ENCODE measurements at regions of chr5 and their contacts with region 1.

Region 1: GRCh38 chr5:13566871-13567339 is 377.6 kb downstream of the DNAH5 start:
- DNase-seq: peak; percentile 71
- H3K4me3 ChIP-seq: no peak overlapping the region
- H3K4me3 Mint-ChIP-seq: no peak overlapping the region
- H3K27ac Mint-ChIP-seq: peak overlapping the region; percentile 77
- H3K4me1 ChIP-seq: peaks cover 27% of the 10 kb centered on the region
- H3K4me1 Mint-ChIP-seq: peaks cover 16% of the 10 kb centered on the region
- H3K27me3 ChIP-seq: no peaks in the 10 kb centered on the region
- H3K27me3 Mint-ChIP-seq: no peaks in the 10 kb centered on the region
- CTCF ChIP-seq: no peak

Region 2: DNA sequence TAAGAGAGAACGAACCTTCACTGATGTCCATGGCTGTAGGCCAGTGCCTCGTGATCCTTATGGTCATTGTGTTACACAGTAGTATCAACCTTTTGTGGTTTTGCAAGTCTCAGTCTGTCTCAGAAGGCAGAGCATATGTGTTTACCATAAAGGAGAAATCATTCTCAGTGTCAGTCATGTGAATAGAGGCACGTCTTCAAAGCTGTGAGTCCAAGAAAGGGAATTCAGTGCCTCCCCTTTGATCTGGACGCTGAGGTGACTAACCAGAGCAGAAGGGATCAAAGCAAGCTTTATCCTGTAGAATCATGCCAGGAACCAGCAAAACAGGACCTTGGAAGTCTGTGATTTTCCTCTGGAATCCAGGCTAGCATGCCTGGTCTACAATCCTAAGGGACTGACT is 56.3 kb before region 1 on chr5:
- CTCF ChIA-PET with region 1: no interaction called
- POLR2A ChIA-PET with region 1: no interaction called
- intact Hi-C with region 1: loop called (anchors 1 kb)
- DNase-seq: peak; percentile 76 to 82
- H3K4me3 ChIP-seq: no peak overlapping the region
- H3K4me3 Mint-ChIP-seq: no peak overlapping the region
- H3K27ac Mint-ChIP-seq: peak overlapping the region; percentile 72
- H3K4me1 ChIP-seq: peaks cover 26% of the 10 kb centered on the region
- H3K4me1 Mint-ChIP-seq: peaks cover 26% of the 10 kb centered on the region
- H3K27me3 ChIP-seq: no peaks in the 10 kb centered on the region
- H3K27me3 Mint-ChIP-seq: no peaks in the 10 kb centered on the region
- CTCF ChIP-seq: no peak

Region 3: DNA sequence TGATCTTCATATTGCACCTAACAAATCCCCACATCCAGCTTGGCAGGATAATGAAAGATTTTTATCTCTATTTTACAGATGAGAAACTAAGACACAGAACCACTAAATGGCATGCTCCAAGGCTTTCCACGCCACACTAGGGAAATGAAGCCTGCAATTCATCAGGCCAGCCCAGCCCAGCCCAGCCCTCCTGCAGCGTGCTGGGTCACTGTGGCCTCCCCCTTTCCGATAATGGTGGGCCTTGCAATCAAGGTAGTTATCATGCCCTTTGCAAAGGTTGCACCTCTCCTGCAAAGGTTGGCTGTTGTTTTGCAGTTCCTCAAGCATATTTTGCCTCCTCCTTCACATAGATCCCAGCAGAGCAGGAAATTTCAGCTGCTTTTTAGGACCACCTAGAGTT is 45.0 kb before region 1 on chr5:
- CTCF ChIA-PET with region 1: no interaction called
- POLR2A ChIA-PET with region 1: no interaction called
- intact Hi-C with region 1: loop called (anchors 2 kb)
- DNase-seq: no peak
- H3K4me3 ChIP-seq: no peak overlapping the region
- H3K4me3 Mint-ChIP-seq: no peak overlapping the region
- H3K27ac Mint-ChIP-seq: no peak overlapping the region
- H3K4me1 ChIP-seq: peaks cover 15% of the 10 kb centered on the region
- H3K4me1 Mint-ChIP-seq: peaks cover 8% of the 10 kb centered on the region
- H3K27me3 ChIP-seq: no peaks in the 10 kb centered on the region
- H3K27me3 Mint-ChIP-seq: no peaks in the 10 kb centered on the region
- CTCF ChIP-seq: no peak

Region 4: GRCh38 chr5:13553896-13554295 is 13.0 kb before region 1 on chr5:
- CTCF ChIA-PET with region 1: no interaction called
- POLR2A ChIA-PET with region 1: no interaction called
- intact Hi-C with region 1: no loop called
- DNase-seq: peak; percentile 40 to 64
- H3K4me3 ChIP-seq: no peak overlapping the region
- H3K4me3 Mint-ChIP-seq: no peak overlapping the region
- H3K27ac Mint-ChIP-seq: no peak overlapping the region
- H3K4me1 ChIP-seq: no peaks in the 10 kb centered on the region
- H3K4me1 Mint-ChIP-seq: no peaks in the 10 kb centered on the region
- H3K27me3 ChIP-seq: no peaks in the 10 kb centered on the region
- H3K27me3 Mint-ChIP-seq: peaks cover 4% of the 10 kb centered on the region
- CTCF ChIP-seq: no peak

Region 5: DNA sequence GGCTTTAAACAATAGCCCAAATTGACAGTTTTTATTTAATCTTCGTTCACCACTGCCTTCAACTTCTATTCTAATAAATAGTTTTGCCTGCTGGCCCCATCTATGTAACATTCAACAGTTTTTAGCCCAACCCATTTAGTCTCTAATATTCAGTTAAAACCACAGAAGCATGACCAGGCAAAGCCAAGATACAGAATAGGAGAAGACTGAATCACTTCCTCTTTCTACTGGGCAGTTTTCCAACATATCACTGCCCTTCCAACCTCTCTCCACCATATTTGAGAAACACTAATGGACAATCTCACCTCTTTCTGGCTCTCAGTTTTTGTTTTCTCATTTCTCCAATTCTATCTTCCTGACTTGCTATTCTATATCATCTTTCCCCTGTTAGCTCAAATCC is 24.7 kb after region 1 on chr5:
- CTCF ChIA-PET with region 1: no interaction called
- POLR2A ChIA-PET with region 1: no interaction called
- intact Hi-C with region 1: loop called (anchors 2 kb)
- DNase-seq: no peak
- H3K4me3 ChIP-seq: no peak overlapping the region
- H3K4me3 Mint-ChIP-seq: no peak overlapping the region
- H3K27ac Mint-ChIP-seq: no peak overlapping the region
- H3K4me1 ChIP-seq: peaks cover 22% of the 10 kb centered on the region
- H3K4me1 Mint-ChIP-seq: peaks cover 33% of the 10 kb centered on the region
- H3K27me3 ChIP-seq: no peaks in the 10 kb centered on the region
- H3K27me3 Mint-ChIP-seq: no peaks in the 10 kb centered on the region
- CTCF ChIP-seq: no peak

Region 6: DNA sequence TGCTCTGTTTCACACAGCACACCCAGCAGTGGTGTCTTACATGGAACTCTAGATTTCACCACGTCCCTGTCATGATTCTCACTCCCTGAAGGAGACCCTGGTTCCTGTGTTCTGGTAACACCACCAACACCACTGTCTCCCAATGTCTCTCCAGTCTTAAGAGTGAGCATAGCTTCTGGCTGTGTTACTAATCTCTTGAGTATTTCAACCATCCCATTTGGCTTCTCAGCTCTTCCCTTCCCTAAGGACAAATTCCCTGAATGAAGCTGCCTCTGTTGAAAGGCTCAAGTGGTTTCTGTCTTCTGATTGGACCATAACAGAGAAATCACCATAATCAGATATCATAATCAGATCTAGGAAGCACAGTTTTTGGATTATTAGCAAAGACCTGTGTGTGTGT is 65.8 kb after region 1 on chr5:
- CTCF ChIA-PET with region 1: no interaction called
- POLR2A ChIA-PET with region 1: no interaction called
- intact Hi-C with region 1: loop called (anchors 2 kb)
- DNase-seq: peak in 1 of 2 experiments; percentile 19
- H3K4me3 ChIP-seq: no peak overlapping the region
- H3K4me3 Mint-ChIP-seq: peak overlapping the region; percentile 8
- H3K27ac Mint-ChIP-seq: peak overlapping the region; percentile 74
- H3K4me1 ChIP-seq: peaks cover 47% of the 10 kb centered on the region
- H3K4me1 Mint-ChIP-seq: peaks cover 55% of the 10 kb centered on the region
- H3K27me3 ChIP-seq: no peaks in the 10 kb centered on the region
- H3K27me3 Mint-ChIP-seq: no peaks in the 10 kb centered on the region
- CTCF ChIP-seq: no peak

Measured in Caco-2 (cell line).